ENCODE measurements at regions of chr6 and their contacts with region 1.

Region 1: DNA sequence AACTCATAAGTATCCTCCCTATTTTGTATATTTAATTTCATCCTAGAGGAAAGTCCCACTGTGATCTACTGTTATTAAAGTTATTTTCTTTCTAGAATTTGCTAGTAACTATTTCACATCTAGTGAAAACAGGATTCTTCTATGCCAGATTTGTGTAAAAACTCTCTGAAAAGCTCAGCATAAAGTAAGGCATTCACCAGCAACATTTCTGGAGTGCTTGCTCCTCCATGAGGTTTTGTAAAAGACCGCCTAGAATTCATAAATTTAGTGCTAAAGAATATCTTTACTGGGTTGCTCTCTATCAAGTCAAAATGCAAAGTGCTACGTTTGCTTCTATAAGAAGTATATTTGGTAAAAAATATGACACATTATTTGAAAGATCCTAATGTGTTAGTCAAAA is 173.5 kb upstream of the IRAK1BP1 start:
- DNase-seq: no peak
- H3K4me3 ChIP-seq: no peak overlapping the region
- CTCF ChIP-seq: no peak
- POLR2A ChIP-seq: no peak

Region 2: DNA sequence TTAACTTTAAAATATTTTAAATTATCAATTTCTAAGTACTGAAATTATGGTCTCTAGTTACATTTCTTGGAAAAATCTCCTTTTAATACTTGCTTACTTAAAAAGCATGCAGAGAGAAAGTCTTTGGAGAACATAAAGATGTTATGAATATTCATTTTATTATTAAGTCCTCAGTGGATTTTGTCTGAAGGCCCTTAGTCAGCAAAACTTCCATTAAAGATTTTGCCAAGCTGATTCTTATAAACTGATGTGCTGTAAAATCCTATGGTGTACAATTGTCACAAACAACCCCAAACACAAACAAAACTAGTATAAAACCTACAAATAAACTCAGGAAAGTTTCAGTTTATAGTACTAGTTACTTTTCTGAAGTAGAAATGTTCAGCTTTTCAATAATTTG is 668.3 kb before region 1 on chr6:
- intact Hi-C with region 1: no loop called
- DNase-seq: no peak
- H3K4me3 ChIP-seq: no peak overlapping the region
- CTCF ChIP-seq: no peak
- POLR2A ChIP-seq: no peak

Region 3: GRCh38 chr6:78243519-78243918 is 450.3 kb before region 1 on chr6:
- intact Hi-C with region 1: loop called (anchors 5 kb)
- DNase-seq: no peak
- H3K4me3 ChIP-seq: no peak overlapping the region
- CTCF ChIP-seq: no peak
- POLR2A ChIP-seq: no peak